Sigmoid colon (tissue), 7 donors: ENCODE measurements at regions of chr1 and their contacts with region 1.

Region 1: GRCh38 chr1:149962123-149962548 is 25.5 kb upstream of the MTMR11 start:
- DNase-seq: no peak
- H3K4me3 ChIP-seq: no peak overlapping the region
- H3K27ac ChIP-seq: peak overlapping the region; percentile 40 to 58 (median 50)
- H3K4me1 ChIP-seq: peaks cover 0 to 7% (median 3%) of the 10 kb centered on the region in 4 donors
- H3K27me3 ChIP-seq: no peaks in the 10 kb centered on the region
- CTCF ChIP-seq: peak; percentile 68 to 79 (median 74)
- EP300 ChIP-seq: no peak
- POLR2A ChIP-seq: no peak

Region 2: DNA sequence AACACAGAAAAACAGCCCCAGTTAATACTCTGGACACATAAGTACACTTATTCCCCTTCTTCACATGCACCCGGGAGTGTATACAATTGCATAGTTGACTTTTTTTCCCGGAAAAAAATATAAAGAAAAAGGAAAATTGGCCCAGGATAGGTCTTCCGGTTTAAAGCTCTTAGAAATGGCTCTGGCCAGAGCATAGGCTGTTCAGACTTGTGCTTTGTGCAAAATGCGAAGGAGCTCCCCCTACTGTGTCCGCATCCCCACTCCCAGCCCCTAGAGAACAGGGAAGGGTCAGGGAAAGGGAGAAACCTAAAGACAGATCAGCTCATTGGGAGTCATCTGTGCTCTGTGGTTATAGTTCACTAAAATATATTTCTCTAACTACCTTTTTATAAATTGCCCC is 19.9 kb before region 1 on chr1:
- intact Hi-C with region 1: no loop called
- DNase-seq: no peak
- H3K4me3 ChIP-seq: no peak overlapping the region
- H3K27ac ChIP-seq: peak overlapping the region; percentile 10 to 38 (median 22)
- H3K4me1 ChIP-seq: peaks cover 0 to 30% (median 23%) of the 10 kb centered on the region in 4 donors
- H3K27me3 ChIP-seq: no peaks in the 10 kb centered on the region
- CTCF ChIP-seq: peak in 1 of 4 experiments; percentile 10
- EP300 ChIP-seq: no peak
- POLR2A ChIP-seq: no peak

Region 3: GRCh38 chr1:150010393-150011115 is 48.4 kb after region 1 on chr1 and contains the start of gene OTUD7B:
- intact Hi-C with region 1: no loop called
- DNase-seq: peak; percentile 94
- H3K4me3 ChIP-seq: peak within 1 kb of the TSS; percentile 89 to 92 (median 90)
- H3K27ac ChIP-seq: peak within 1 kb of the TSS; percentile 96 to 99 (median 98)
- H3K4me1 ChIP-seq: peaks cover 0 to 45% (median 36%) of the 10 kb centered on the region in 4 donors
- H3K27me3 ChIP-seq: no peaks in the 10 kb centered on the region
- CTCF ChIP-seq: no peak
- EP300 ChIP-seq: peak in 1 of 4 donors; percentile 6
- POLR2A ChIP-seq: peak; percentile 74 to 75
- total RNA-seq, gene OTUD7B: 17.0 to 25.2 (median 19.5) TPM

Region 4: GRCh38 chr1:150049926-150050325 is 87.8 kb after region 1 on chr1:
- intact Hi-C with region 1: loop called (anchors 1 kb)
- DNase-seq: no peak
- H3K4me3 ChIP-seq: no peak overlapping the region
- H3K27ac ChIP-seq: no peak overlapping the region
- H3K4me1 ChIP-seq: peaks cover 0 to 9% (median 3%) of the 10 kb centered on the region in 4 donors
- H3K27me3 ChIP-seq: no peaks in the 10 kb centered on the region
- CTCF ChIP-seq: no peak
- EP300 ChIP-seq: no peak
- POLR2A ChIP-seq: no peak

Region 5: DNA sequence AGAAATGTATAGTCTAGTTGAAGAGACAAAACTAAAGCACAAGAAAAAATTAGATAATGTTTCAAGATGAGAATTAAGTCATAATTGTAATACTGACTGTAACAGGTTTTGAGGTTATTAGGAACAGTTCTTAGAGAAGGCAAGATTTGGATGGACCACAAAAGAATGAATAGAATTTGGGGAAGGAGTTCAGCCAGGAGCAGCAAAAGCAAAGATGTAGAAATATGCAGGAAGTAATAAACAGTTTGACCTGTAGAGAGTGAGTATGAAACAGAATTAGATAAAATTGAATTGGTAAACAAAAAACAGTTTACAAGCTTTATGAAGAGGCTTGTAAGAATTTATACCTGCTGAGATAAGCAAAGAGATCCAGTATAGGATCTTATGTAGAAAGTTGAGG is 121.8 kb after region 1 on chr1:
- intact Hi-C with region 1: no loop called
- DNase-seq: no peak
- H3K4me3 ChIP-seq: no peak overlapping the region
- H3K27ac ChIP-seq: peak overlapping the region in 1 of 4 donors; percentile 40
- H3K4me1 ChIP-seq: no peaks in the 10 kb centered on the region
- H3K27me3 ChIP-seq: no peaks in the 10 kb centered on the region
- CTCF ChIP-seq: no peak
- EP300 ChIP-seq: no peak
- POLR2A ChIP-seq: no peak

Region 6: GRCh38 chr1:150168960-150169601 is 206.9 kb after region 1 on chr1:
- intact Hi-C with region 1: loop called (anchors 1 kb)
- DNase-seq: peak; percentile 89
- H3K4me3 ChIP-seq: no peak overlapping the region
- H3K27ac ChIP-seq: no peak overlapping the region
- H3K4me1 ChIP-seq: peaks cover 0 to 25% (median 22%) of the 10 kb centered on the region in 4 donors
- H3K27me3 ChIP-seq: no peaks in the 10 kb centered on the region
- CTCF ChIP-seq: peak; percentile 81 to 86 (median 84)
- EP300 ChIP-seq: no peak
- POLR2A ChIP-seq: no peak

Region 7: GRCh38 chr1:150186789-150187559 is 224.8 kb after region 1 on chr1:
- intact Hi-C with region 1: loop called (anchors 5 kb)
- DNase-seq: no peak
- H3K4me3 ChIP-seq: peak overlapping the region in 2 of 4 donors; percentile 1 to 25
- H3K27ac ChIP-seq: peak overlapping the region in 2 of 4 donors; percentile 33 to 52
- H3K4me1 ChIP-seq: peaks cover 0 to 12% (median 3%) of the 10 kb centered on the region in 4 donors
- H3K27me3 ChIP-seq: no peaks in the 10 kb centered on the region
- CTCF ChIP-seq: peak in 3 of 4 experiments; percentile 22 to 42 (median 36)
- EP300 ChIP-seq: no peak
- POLR2A ChIP-seq: no peak